GM13976 (cell line): ENCODE measurements at regions of chr1 and their contacts with region 1.

Region 1: DNA sequence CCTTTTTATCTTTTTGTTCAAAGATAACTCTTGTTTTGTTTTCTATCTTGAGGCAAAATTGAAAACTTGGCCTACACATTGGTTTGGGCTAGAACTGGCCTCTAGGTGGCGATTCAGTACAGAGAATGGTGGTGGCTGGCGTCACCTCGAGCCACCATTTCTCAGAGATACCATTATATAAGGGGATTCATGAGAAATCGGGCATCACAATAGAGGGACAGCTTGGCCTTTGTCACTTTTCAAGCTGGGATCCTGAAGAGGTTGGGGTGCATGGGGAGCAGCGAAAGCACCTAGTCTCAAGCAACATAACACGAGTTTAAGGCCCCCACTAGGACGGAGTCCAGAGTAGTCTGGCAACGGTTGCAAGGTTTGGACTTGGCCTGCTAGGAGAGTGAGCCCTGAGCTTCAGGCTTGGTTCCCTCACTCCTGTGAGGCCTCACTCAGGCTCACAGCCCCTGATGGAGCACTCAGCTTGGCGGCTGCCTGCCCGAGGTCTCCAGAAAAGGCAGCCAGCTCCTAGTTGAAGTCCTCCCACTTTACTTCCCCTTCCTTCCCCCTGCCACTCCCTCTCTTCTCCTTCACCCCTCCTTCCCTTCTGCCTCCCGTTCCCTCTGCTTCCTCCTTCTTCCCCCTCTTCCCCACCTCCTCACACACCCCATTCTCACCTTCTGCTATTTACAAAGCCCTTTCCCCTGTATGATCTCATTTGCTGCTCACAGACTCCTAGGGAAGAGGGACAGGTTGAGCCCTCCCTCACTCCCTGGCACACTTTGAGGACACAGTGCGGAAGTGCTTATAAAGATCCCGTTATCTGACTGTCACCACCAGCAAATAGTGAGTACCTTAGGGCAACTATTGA is 67.8 kb downstream of the LRIG2 start:
- DNase-seq: peak; percentile 60
- CTCF ChIP-seq: peak; percentile 70

Region 2: DNA sequence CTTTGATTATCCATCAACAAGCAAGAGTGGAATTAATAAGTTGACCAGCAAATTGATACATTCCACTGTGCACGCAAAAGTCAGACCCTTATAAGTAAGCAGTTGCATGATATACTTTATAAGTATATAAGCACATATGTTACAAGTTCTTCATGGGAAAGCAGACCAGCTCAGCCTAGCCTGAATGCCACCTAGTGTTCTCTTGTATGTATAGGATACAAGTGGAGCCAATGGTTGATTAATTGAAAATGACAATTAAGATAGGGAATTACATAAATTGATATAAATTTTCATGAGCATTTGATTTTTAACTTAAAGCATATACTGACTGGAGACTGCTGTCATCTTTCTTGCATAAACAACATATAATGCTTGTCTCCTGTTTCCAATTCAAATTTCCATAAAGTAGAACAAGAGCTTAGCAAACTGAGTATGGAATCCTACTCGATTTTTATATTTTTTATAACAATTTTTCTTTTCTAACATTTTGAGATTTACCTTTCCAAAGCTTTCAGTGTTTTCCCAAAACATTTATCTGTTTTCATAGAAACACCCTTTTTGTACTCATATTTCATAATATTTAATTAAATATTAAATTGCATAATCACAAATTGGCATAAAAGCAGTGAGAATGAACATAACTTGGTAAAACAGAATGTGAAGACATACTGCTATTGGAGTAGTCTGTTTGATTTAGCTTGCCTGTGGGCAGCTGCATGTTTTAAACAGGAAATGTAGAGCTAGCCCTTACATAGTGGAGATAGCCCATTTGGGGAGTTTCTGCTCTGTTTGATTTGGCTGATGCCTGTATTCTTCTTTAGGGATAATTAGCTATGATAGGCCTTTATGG is 312.3 kb after region 1 on chr1:
- in situ Hi-C with region 1: loop called (anchors 10 kb)
- DNase-seq: peak; percentile 24
- CTCF ChIP-seq: peak; percentile 15

Region 3: GRCh38 chr1:113534130-113534817 is 393.5 kb after region 1 on chr1:
- in situ Hi-C with region 1: no loop called
- DNase-seq: no peak
- CTCF ChIP-seq: no peak

Region 4: GRCh38 chr1:113669984-113670383 is 529.2 kb after region 1 on chr1:
- in situ Hi-C with region 1: loop called (anchors 5 kb)
- DNase-seq: no peak
- CTCF ChIP-seq: no peak